ENCODE measurements at regions of chr22 and their contacts with region 1.

Region 1: GRCh38 chr22:24707470-24707801 is 67.1 kb downstream of the PIWIL3 start:
- DNase-seq: no peak
- ATAC-seq: peak; percentile 57 to 77
- H3K4me3 ChIP-seq: peak overlapping the region; percentile 1
- H3K27ac ChIP-seq: no peak overlapping the region
- H3K4me1 ChIP-seq: no peaks in the 10 kb centered on the region
- H3K27me3 ChIP-seq: no peaks in the 10 kb centered on the region
- CTCF ChIP-seq: peak; percentile 20

Region 2: GRCh38 chr22:24758164-24758799 is 50.8 kb after region 1 on chr22:
- intact Hi-C with region 1: loop called (anchors 10 kb)
- DNase-seq: no peak
- ATAC-seq: peak; percentile 45 to 51
- H3K4me3 ChIP-seq: no peak overlapping the region
- H3K27ac ChIP-seq: no peak overlapping the region
- H3K4me1 ChIP-seq: no peaks in the 10 kb centered on the region
- H3K27me3 ChIP-seq: peaks cover 3% of the 10 kb centered on the region
- CTCF ChIP-seq: peak; percentile 81

Region 3: GRCh38 chr22:25282671-25283561 is 575.5 kb after region 1 on chr22:
- intact Hi-C with region 1: no loop called
- DNase-seq: no peak
- ATAC-seq: no peak
- H3K4me3 ChIP-seq: no peak overlapping the region
- H3K27ac ChIP-seq: no peak overlapping the region
- H3K4me1 ChIP-seq: no peaks in the 10 kb centered on the region
- H3K27me3 ChIP-seq: peaks cover 40% of the 10 kb centered on the region
- CTCF ChIP-seq: no peak

Measured in lower lobe of right lung (tissue), 2 donors.